ENCODE measurements at regions of chr1 and their contacts with region 1.

Region 1: DNA sequence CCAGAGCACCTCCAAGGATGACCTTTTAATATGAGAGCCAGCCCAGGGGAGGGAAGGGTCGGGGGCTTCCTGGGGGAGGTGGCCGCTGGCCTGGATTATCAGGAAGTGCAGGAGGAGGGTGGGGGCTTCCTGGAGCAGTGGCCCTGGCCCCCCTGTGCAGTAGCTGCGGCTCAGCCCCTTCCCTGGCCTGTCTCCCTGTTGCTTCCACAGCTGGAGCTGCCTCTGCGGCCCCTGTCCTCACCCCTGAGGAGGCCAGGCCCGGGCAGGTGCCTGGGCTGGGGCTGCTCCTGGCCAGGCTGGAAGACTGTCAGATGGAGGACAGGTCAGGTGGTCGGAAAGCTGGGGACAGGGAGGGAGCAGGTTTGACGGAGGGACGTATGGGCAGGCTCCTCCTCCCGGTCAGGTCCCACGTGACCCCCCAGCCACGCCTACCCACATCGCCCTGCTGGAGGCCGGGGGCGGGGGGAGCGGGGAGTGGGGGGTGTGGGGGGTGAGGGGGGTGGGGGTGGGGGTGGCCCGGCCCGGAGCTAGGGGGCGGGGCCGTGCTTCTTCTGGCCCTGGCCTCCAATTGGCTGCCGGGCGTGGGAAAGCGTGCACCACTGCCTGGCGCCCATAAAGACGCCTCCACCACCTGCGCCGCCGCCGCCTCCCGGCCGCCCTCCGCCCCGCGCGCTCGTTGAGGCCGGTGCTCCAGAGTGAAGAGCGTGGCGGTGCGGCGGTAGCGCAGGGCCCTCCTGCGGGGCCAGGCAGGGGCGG is 10.2 kb upstream of the TNFRSF14 start:
- DNase-seq: peak; percentile 83 to 91 (median 86)
- ATAC-seq: peak; percentile 74
- H3K4me3 ChIP-seq: peak overlapping the region; percentile 88
- H3K4me3 Mint-ChIP-seq: peak overlapping the region; percentile 27 to 97 (median 94)
- H3K27ac ChIP-seq: peak overlapping the region; percentile 97
- H3K27ac Mint-ChIP-seq: peak overlapping the region in 8 of 9 donors; percentile 28 to 98 (median 97)
- H3K4me1 ChIP-seq: peaks cover 18 to 40% of the 10 kb centered on the region in 2 donors
- H3K4me1 Mint-ChIP-seq: peaks cover 0 to 41% (median 18%) of the 10 kb centered on the region in 7 donors
- H3K27me3 ChIP-seq: no peaks in the 10 kb centered on the region
- H3K27me3 Mint-ChIP-seq: peaks cover 0 to 16% (median 0%) of the 10 kb centered on the region in 5 donors

Region 2: DNA sequence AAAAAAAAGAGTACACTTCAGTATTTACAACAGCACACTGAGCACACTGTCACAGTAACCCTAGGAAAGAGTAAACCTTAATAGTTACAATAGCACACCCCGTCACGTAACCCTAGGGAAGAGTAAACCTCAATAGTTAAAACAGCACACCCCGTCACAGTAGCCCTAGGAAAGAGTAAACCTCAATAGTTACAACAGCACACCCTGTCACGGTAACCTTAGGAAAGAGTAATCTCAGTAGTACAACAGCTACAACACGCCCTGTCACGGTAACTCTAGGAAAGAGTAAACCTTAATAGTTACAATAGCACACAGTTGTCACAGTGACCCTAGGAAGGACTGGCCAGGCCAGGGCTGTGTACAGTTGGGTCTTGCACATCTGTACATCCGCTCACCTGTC is 824.7 kb before region 1 on chr1:
- CTCF ChIA-PET with region 1: no interaction called
- POLR2A ChIA-PET with region 1: no interaction called
- intact Hi-C with region 1: no loop called
- DNase-seq: no peak
- ATAC-seq: no peak
- H3K4me3 ChIP-seq: no peak overlapping the region
- H3K4me3 Mint-ChIP-seq: peak overlapping the region in 2 of 10 donors; percentile 4 to 43
- H3K27ac ChIP-seq: no peak overlapping the region
- H3K27ac Mint-ChIP-seq: peak overlapping the region in 5 of 9 donors; percentile 28 to 67 (median 51)
- H3K4me1 ChIP-seq: no peaks in the 10 kb centered on the region
- H3K4me1 Mint-ChIP-seq: peaks cover under 1 to 18% (median 12%) of the 10 kb centered on the region in 7 donors
- H3K27me3 ChIP-seq: no peaks in the 10 kb centered on the region
- H3K27me3 Mint-ChIP-seq: peaks cover 0 to 4% (median 0%) of the 10 kb centered on the region in 5 donors

Region 3: DNA sequence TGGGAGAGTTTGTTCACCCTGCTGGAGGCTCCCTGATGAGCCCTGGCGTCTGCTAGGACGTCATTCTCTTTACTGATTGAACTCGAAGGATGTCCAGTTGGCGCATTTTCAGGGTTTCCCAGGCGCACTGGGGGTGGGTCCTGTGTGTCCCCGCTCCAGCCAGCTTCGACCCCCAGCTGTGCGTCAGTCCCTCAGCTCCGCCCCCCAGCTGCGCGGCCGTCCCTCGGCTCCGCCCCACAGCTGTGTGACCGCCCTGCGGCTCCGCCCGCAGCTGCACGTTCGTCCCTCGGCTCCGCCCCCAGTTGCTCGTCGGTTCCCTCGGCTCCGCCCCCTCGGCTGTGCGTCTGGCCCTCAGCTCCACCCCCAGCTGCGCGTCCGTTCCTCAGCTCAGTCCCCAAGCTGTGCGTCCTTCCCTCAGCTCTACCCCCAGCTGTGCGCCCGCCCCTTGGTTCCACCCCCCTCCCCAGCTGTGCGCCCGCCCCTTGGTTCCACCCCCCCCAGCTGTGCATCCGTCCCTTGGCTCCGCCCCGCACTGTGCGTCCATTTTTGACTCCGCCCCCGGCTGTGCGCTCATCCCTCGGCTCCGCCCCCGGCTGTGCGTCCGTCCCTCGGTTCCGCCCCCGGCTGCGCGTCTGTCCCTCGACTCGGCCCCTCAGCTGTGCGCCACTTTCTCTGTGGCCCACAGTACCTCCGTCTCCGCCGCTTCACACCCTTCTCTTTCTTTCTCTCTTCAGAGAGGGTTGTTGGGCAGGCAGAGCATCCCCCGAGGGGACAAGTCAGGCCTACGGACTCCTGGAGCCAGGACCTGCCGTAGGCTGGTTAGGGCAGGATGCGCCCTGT is 412.7 kb before region 1 on chr1:
- CTCF ChIA-PET with region 1: no interaction called
- POLR2A ChIA-PET with region 1: no interaction called
- intact Hi-C with region 1: loop called in 1 of 2 experiments (anchors 2 kb)
- DNase-seq: peak; percentile 93 to 97 (median 96)
- ATAC-seq: peak; percentile 94
- H3K4me3 ChIP-seq: peak overlapping the region; percentile 66
- H3K4me3 Mint-ChIP-seq: peak overlapping the region; percentile 73 to 88 (median 83)
- H3K27ac ChIP-seq: peak overlapping the region; percentile 80
- H3K27ac Mint-ChIP-seq: peak overlapping the region; percentile 54 to 96 (median 93)
- H3K4me1 ChIP-seq: peaks cover 10% of the 10 kb centered on the region in 2 donors
- H3K4me1 Mint-ChIP-seq: peaks cover 5 to 32% (median 17%) of the 10 kb centered on the region in 7 donors
- H3K27me3 ChIP-seq: no peaks in the 10 kb centered on the region
- H3K27me3 Mint-ChIP-seq: no peaks in the 10 kb centered on the region

Region 4: GRCh38 chr1:2227346-2228153 is 318.4 kb before region 1 on chr1:
- CTCF ChIA-PET with region 1: no interaction called
- POLR2A ChIA-PET with region 1: interaction called, 5 read pairs
- intact Hi-C with region 1: loop called in 1 of 2 experiments (anchors 1 kb)
- DNase-seq: peak; percentile 87 to 98 (median 97)
- ATAC-seq: peak; percentile 88
- H3K4me3 ChIP-seq: peak overlapping the region; percentile 33
- H3K4me3 Mint-ChIP-seq: peak overlapping the region in 9 of 10 donors; percentile 56 to 83 (median 69)
- H3K27ac ChIP-seq: peak overlapping the region; percentile 72
- H3K27ac Mint-ChIP-seq: peak overlapping the region in 4 of 9 donors; percentile 26 to 80 (median 62)
- H3K4me1 ChIP-seq: peaks cover 5 to 14% of the 10 kb centered on the region in 2 donors
- H3K4me1 Mint-ChIP-seq: peaks cover 9 to 24% (median 17%) of the 10 kb centered on the region in 7 donors
- H3K27me3 ChIP-seq: no peaks in the 10 kb centered on the region
- H3K27me3 Mint-ChIP-seq: peaks cover 0 to 8% (median 0%) of the 10 kb centered on the region in 5 donors

Region 5: DNA sequence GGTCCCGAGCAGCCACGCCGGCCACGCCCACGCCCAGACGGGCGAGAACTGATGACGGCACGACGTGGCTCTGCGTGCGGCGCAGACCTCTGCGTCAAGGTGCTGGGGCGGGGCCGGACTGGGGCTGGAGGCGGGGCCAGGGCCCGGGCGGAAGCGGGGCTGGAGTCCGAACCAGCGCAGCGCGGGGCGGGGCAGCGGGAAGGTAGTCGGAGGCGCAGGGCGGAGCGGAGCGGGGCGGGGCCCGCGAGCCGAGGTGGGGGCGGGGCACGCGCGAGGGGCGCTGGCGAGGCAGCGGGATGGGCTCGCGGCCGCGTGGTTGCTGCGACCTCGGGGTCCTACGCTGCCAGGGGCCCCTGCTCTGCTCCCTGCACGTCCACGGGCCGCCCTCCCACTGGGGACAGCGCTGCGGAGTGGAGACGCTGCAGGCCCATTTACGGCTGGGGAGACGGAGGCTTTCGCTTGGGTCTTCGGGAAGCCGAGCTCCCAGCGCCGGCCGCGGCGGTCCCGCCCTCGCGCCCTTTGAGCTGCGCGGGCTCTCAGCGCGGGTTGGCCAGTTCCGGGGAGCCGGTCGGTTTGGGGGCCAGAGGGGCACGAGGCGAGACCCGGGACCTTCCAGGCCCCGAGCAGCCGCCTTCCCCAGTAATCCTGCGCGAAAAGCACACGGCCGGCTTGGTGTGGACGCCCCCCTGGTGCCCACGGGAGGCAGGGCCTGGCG is 133.3 kb before region 1 on chr1 and contains the start of gene PEX10:
- CTCF ChIA-PET with region 1: interaction called, 32 read pairs
- POLR2A ChIA-PET with region 1: interaction called, 68 read pairs
- intact Hi-C with region 1: loop called (anchors 1 kb)
- DNase-seq: peak; percentile 95 to 100 (median 98)
- ATAC-seq: peak; percentile 97
- H3K4me3 ChIP-seq: peak within 1 kb of the TSS; percentile 71
- H3K4me3 Mint-ChIP-seq: peak within 1 kb of the TSS; percentile 83 to 91 (median 86)
- H3K27ac ChIP-seq: peak within 1 kb of the TSS; percentile 95
- H3K27ac Mint-ChIP-seq: peak within 1 kb of the TSS; percentile 31 to 94 (median 87)
- H3K4me1 ChIP-seq: peaks cover 37 to 45% of the 10 kb centered on the region in 2 donors
- H3K4me1 Mint-ChIP-seq: peaks cover 27 to 45% (median 35%) of the 10 kb centered on the region in 7 donors
- H3K27me3 ChIP-seq: no peaks in the 10 kb centered on the region
- H3K27me3 Mint-ChIP-seq: no peaks in the 10 kb centered on the region
- total RNA-seq, gene PEX10: 8.7 to 14.9 (median 12.3) TPM

Region 6: DNA sequence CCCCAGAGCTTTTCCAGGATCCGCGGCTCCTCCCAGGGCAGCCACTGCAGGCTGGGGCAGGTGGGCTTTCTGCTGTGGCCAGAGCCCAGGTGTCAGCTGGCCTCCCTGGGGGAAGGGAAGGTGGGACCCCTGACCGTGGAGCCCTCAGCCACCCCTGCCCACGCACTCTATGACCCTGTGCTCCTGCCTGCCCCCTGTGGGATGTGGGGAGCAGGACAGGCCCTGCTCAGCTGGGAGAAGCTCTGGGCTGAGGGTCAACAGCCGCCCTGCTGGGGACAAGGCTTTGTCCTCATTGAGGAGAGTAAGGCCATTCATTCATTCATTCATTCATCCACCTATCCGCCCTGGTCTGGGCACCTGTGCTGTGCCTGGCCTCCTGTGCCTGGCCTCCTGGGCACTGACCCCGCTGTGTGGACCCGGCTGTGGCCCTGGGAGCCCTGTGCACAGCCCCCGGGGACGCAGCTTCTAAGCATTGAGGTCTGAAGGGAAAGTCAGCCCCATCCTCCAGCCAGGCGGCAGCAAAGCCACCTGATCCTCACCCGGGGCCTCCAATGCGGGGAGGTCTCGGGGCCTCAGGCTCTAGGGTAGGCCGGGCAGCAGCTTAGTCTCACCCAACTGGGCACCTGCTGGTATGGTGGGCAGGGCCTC is 16.1 kb after region 1 on chr1:
- CTCF ChIA-PET with region 1: no interaction called
- POLR2A ChIA-PET with region 1: interaction called, 15 read pairs
- intact Hi-C with region 1: no loop called
- DNase-seq: no peak
- ATAC-seq: peak; percentile 60
- H3K4me3 ChIP-seq: no peak overlapping the region
- H3K4me3 Mint-ChIP-seq: peak overlapping the region in 1 of 10 donors; percentile 18
- H3K27ac ChIP-seq: peak overlapping the region; percentile 40
- H3K27ac Mint-ChIP-seq: peak overlapping the region in 2 of 9 donors; percentile 9 to 84
- H3K4me1 ChIP-seq: peaks cover 12 to 17% of the 10 kb centered on the region in 2 donors
- H3K4me1 Mint-ChIP-seq: peaks cover 6 to 26% (median 19%) of the 10 kb centered on the region in 7 donors
- H3K27me3 ChIP-seq: no peaks in the 10 kb centered on the region
- H3K27me3 Mint-ChIP-seq: no peaks in the 10 kb centered on the region

Region 7: GRCh38 chr1:2586154-2587070 is 40.5 kb after region 1 on chr1 and contains the start of gene PRXL2B:
- CTCF ChIA-PET with region 1: interaction called, 21 read pairs
- POLR2A ChIA-PET with region 1: interaction called, 98 read pairs
- intact Hi-C with region 1: loop called (anchors 1 kb)
- DNase-seq: peak; percentile 90 to 100 (median 96)
- ATAC-seq: peak; percentile 86
- H3K4me3 ChIP-seq: peak within 1 kb of the TSS; percentile 78
- H3K4me3 Mint-ChIP-seq: peak within 1 kb of the TSS; percentile 81 to 96 (median 92)
- H3K27ac ChIP-seq: peak within 1 kb of the TSS; percentile 87
- H3K27ac Mint-ChIP-seq: peak within 1 kb of the TSS; percentile 87 to 99 (median 96)
- H3K4me1 ChIP-seq: peaks cover 27 to 30% of the 10 kb centered on the region in 2 donors
- H3K4me1 Mint-ChIP-seq: peaks cover 24 to 45% (median 38%) of the 10 kb centered on the region in 7 donors
- H3K27me3 ChIP-seq: no peaks in the 10 kb centered on the region
- H3K27me3 Mint-ChIP-seq: no peaks in the 10 kb centered on the region
- total RNA-seq, gene PRXL2B: 12.3 to 37.0 (median 26.7) TPM

Region 8: DNA sequence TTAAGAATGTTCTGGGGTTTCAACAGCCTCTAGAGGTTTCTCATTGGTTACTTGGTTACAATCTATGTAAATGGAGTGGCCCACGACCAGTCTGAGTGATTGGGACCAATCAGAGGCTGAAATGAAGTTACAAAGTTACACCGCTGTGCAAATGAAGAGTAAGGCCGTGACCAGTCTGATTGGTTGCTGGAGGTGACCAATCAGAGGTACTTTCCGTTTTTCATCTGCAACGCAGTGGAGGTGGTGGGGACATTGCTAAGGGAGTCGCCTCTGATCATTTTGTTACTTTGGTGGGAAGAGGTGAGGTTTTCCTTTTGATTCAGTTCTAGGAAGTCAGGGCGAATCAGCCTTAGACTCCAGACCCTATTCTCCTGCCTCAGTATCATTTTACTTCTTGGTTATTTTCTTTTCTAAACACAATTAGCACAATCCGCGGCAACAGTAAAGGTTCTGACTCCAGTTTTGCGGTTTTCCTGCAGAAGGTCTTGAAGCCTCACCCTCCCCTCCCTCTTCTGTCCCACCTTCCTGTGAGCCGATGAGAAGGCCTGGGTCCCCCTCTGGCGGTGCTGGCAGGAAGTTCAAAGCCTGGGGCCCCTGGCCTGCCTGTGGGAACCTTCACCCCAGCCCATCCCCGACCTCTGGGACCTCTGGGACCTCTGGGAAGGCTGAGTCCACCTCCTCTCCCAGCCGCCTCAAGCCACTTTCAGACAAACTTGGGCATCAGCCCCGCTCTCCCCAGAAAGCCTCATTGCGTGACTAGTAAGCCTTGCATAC is 294.3 kb after region 1 on chr1:
- CTCF ChIA-PET with region 1: no interaction called
- POLR2A ChIA-PET with region 1: no interaction called
- intact Hi-C with region 1: loop called in 1 of 2 experiments (anchors 1 kb)
- DNase-seq: peak in 8 of 9 donors; percentile 43 to 87 (median 82)
- ATAC-seq: peak; percentile 89
- H3K4me3 ChIP-seq: peak overlapping the region; percentile 31
- H3K4me3 Mint-ChIP-seq: peak overlapping the region; percentile 49 to 88 (median 78)
- H3K27ac ChIP-seq: peak overlapping the region; percentile 60
- H3K27ac Mint-ChIP-seq: peak overlapping the region; percentile 40 to 92 (median 90)
- H3K4me1 ChIP-seq: peaks cover 10 to 17% of the 10 kb centered on the region in 2 donors
- H3K4me1 Mint-ChIP-seq: peaks cover 11 to 24% (median 23%) of the 10 kb centered on the region in 7 donors
- H3K27me3 ChIP-seq: no peaks in the 10 kb centered on the region
- H3K27me3 Mint-ChIP-seq: peaks cover 0 to 4% (median 0%) of the 10 kb centered on the region in 5 donors